ENCODE measurements at regions of chr15 and their contacts with region 1.

Region 1: GRCh38 chr15:45118131-45118588 is 4.0 kb downstream of the DUOXA2 start:
- DNase-seq: peak; percentile 93 to 95 (median 94)
- ATAC-seq: peak; percentile 100
- H3K4me3 ChIP-seq: no peak overlapping the region
- H3K27ac ChIP-seq: no peak overlapping the region
- H3K4me1 ChIP-seq: peaks cover 0 to 23% of the 10 kb centered on the region in 2 experiments; a peak in 3 of 5 replicates
- H3K27me3 ChIP-seq: peaks cover 6 to 38% of the 10 kb centered on the region in 2 experiments; a peak in 4 of 5 replicates
- CTCF ChIP-seq: peak; percentile 100
- EP300 ChIP-seq: 0 out of 2 replicates have a peak, but pooled peaks have one; percentile 38
- POLR2A ChIP-seq: no peak
- RAD21 ChIP-seq: peak; percentile 93 to 97

Region 2: DNA sequence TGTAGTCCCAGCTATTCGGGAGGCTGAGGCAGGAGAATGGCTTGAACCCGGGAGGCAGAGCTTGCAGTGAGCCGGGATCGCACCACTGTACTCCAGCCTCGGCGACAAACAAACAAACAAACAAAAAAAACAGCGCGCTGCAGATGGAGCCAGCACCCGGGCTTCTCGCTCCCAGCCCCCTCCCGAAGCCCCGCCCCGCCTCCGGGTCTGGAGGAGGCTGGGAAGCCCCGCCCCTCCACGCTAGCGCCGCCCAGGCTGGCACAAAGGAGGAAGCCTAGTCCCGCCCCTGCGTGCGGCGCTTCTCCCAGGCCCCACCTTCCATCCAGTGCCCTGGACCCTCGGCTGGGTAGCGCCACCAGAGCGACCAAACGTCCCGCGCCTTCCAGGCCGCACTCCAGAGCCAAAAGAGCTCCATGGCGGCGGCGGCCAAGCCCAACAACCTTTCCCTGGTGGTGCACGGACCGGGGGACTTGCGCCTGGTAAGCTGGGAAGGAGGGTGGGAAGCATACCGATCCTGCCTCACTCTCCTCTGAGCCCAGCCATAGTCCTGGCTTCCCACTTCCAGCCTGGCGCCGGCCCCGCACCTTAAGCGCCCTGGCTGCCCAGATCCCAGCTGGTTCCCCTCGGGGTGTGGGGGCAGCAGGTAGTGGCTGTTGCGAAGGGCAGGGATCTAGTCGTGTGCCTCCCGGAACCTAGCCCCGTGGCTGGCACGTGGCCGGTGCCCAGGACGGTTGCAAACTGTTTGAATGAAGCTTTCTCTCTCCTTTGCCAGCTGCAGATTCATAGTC is 95.1 kb before region 1 on chr15 and contains the start of gene SORD:
- CTCF ChIA-PET with region 1: no interaction called
- POLR2A ChIA-PET with region 1: no interaction called
- in situ Hi-C with region 1: no loop called
- intact Hi-C with region 1: no loop called
- DNase-seq: peak; percentile 95 to 99 (median 98)
- ATAC-seq: peak; percentile 95
- H3K4me3 ChIP-seq: peak within 1 kb of the TSS; percentile 70
- H3K27ac ChIP-seq: peak within 1 kb of the TSS; percentile 64
- H3K4me1 ChIP-seq: peaks cover 21 to 29% of the 10 kb centered on the region in 2 experiments; a peak in 4 of 5 replicates
- H3K27me3 ChIP-seq: peaks cover 0 to 6% of the 10 kb centered on the region in 2 experiments; a peak in 2 of 5 replicates
- CTCF ChIP-seq: no peak
- EP300 ChIP-seq: no peak
- POLR2A ChIP-seq: peak; percentile 75
- RAD21 ChIP-seq: no peak
- polyA plus RNA-seq, gene SORD: 5.9 to 14.1 TPM

Region 3: GRCh38 chr15:45037936-45038335 is 80.2 kb before region 1 on chr15:
- CTCF ChIA-PET with region 1: interaction called, 3 read pairs
- POLR2A ChIA-PET with region 1: no interaction called
- in situ Hi-C with region 1: no loop called
- intact Hi-C with region 1: loop called (anchors 2 kb)
- DNase-seq: no peak
- ATAC-seq: no peak
- H3K4me3 ChIP-seq: no peak overlapping the region
- H3K27ac ChIP-seq: no peak overlapping the region
- H3K4me1 ChIP-seq: peaks cover 0 to 8% of the 10 kb centered on the region in 2 experiments; a peak in 4 of 5 replicates
- H3K27me3 ChIP-seq: no peaks in the 10 kb centered on the region
- CTCF ChIP-seq: no peak
- EP300 ChIP-seq: no peak
- POLR2A ChIP-seq: no peak
- RAD21 ChIP-seq: no peak

Measured in K562 (cell line).